ENCODE measurements at regions of chr13 and their contacts with region 1.

Region 1: GRCh38 chr13:73058736-73059459 is at the start of gene KLF5:
- DNase-seq: peak; percentile 95
- H3K4me3 Mint-ChIP-seq: peak within 1 kb of the TSS; percentile 87
- H3K27ac Mint-ChIP-seq: no peak within 1 kb of the TSS
- H3K4me1 Mint-ChIP-seq: peaks cover 17% of the 10 kb centered on the region
- H3K27me3 Mint-ChIP-seq: peaks cover 22% of the 10 kb centered on the region
- total RNA-seq, gene KLF5: 1.3 to 1.9 TPM

Region 2: DNA sequence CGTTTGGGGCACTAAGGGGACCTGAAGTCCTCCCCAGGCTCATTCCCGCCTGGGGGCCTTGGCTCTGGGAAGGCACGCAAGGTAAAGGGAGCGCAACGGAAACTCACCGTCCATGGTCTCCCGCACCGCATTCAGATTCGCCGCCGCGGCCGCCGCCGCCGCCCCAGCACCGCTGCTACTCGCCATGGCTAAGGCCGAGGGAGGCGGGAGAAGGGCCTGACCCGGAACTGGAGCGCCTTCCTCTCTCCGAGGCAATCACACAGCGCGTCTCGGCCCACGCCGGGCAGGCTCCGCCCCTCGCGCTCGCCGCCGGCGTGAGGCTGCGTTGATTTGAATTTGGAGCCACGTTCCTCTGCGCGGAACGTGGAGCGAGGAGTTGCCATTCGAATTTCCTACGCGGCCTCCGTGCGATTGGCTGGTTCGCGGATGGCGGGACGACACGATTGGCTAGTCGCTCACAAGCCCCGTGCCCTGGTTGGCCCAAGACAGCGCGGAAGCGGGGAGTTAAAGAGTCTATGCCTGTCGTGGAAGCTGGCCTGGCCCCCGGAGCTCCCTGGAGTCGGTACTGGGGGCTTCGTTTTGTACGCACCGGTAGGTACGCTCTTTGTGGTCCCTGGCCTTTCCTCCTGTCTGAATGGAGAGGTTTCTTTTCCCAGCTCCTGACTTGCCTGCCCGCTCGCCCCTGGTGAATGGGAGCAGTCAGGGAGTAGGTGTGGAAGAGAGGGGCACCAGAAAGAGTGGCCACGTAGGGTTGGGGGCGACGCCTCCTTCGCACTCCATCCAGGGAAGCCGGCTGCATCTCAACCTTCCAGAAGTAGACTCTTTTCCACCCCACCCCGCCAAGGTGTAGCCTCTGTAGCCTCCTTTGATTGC is 331.2 kb before region 1 on chr13 and contains the starts of genes BORA and MZT1:
- CTCF ChIA-PET with region 1: no interaction called
- intact Hi-C with region 1: loop called (anchors 1 kb)
- DNase-seq: peak; percentile 97
- H3K4me3 Mint-ChIP-seq: peak within 1 kb of the TSS; percentile 90
- H3K27ac Mint-ChIP-seq: peak within 1 kb of the TSS; percentile 81
- H3K4me1 Mint-ChIP-seq: peaks cover 41% of the 10 kb centered on the region
- H3K27me3 Mint-ChIP-seq: no peaks in the 10 kb centered on the region
- total RNA-seq, gene BORA: 17.3 to 19.5 TPM
- total RNA-seq, gene MZT1: 32.4 to 32.9 TPM

Region 3: DNA sequence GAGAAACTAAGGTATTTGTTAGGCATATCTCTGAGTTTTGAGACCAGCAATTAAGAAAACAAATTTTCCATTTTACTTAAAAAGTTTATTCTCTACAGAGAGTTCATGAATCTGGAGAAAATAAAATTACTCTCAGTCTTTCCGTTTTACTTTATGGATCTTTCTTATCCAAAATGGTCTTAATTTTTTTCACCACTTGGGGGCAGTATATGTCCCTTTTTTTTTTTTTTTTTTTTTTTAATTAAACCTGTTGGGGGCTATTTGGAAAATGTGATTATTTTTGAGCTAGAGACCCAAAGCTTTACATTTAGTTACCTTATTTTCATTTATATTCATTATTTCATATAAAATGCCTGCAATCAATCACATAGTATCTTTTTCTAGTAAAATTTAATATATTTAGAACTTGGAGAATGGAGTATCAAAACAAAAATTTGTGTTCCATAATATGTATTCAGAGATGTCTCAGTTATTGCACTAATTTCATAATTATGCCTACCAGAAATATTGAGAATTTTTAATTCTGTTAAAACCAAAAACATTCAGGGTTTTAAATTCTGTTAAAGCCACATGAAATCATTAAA is 249.9 kb before region 1 on chr13:
- CTCF ChIA-PET with region 1: interaction called, 3 read pairs
- intact Hi-C with region 1: loop called (anchors 2 kb)
- DNase-seq: no peak
- H3K4me3 Mint-ChIP-seq: no peak overlapping the region
- H3K27ac Mint-ChIP-seq: no peak overlapping the region
- H3K4me1 Mint-ChIP-seq: peaks cover 4% of the 10 kb centered on the region
- H3K27me3 Mint-ChIP-seq: no peaks in the 10 kb centered on the region

Region 4: GRCh38 chr13:72864142-72865011 is 194.5 kb before region 1 on chr13:
- CTCF ChIA-PET with region 1: no interaction called
- intact Hi-C with region 1: loop called (anchors 10 kb)
- DNase-seq: no peak
- H3K4me3 Mint-ChIP-seq: no peak overlapping the region
- H3K27ac Mint-ChIP-seq: peak overlapping the region; percentile 85
- H3K4me1 Mint-ChIP-seq: peaks cover 13% of the 10 kb centered on the region
- H3K27me3 Mint-ChIP-seq: no peaks in the 10 kb centered on the region

Region 5: DNA sequence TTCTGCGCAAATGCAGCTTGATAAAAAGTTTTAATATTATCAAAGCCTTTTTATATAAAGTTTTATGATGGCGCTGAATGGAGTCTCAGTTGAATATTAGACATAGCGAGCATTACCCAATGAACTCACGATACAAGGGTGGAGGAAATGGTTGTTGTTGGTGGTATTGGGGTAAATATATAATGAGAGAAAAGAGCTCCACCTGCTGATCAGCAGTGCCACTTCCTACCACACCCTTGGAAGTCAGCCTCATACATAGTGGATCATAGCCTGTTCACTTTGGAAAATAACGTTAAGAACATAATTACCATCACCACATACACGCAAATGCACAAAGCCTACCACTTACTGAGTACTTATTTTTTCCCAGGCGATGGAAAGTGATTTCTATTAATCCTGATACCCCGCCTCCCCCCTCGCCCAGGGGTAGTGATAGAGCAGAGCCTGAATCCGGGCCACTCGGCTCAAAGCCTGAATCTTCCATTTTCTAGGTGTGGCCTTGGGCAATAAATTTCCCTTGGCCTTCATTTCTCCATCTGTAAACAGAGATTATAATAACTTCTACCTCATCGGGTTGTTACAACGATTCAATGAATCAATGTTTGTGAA is 358.2 kb after region 1 on chr13:
- CTCF ChIA-PET with region 1: no interaction called
- intact Hi-C with region 1: loop called (anchors 2 kb)
- DNase-seq: no peak
- H3K4me3 Mint-ChIP-seq: no peak overlapping the region
- H3K27ac Mint-ChIP-seq: no peak overlapping the region
- H3K4me1 Mint-ChIP-seq: no peaks in the 10 kb centered on the region
- H3K27me3 Mint-ChIP-seq: no peaks in the 10 kb centered on the region

Measured in activated naive CD4-positive, alpha-beta T cell treated with anti-CD3 and anti-CD28 coated beads for 36 hours (primary cell).